Stomach (tissue), 19 donors: ENCODE measurements at regions of chr4 and their contacts with region 1.

Region 1: DNA sequence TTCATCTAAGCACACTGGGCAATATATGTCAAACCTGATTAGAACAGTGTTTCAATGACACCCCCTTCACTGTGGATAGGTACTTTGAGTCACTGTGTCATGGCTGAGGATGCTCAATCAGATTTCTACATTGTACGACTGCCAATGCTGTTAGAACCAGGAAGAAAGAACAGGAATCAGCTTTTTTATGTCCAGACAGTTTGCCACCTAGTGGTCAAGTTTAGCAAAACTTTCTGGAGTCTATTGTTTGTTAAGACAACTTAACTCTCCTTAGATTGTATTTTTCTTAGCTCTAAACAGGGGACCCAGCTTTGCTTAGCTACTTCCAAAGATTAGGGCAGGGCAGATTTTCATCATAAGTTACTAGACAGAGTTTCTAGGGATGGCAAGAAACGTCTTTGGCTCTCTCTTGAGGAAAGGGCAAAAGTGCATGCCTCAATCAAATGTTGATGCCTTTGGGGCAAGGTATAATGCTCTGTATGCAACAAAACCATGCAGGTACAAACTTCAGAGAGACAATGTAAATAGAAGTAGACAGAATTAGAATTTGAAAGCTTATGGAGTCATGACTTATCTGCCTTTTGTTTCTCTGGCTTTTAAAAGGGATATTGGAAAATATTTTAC is 40.5 kb upstream of the BMP3 start:
- DNase-seq: peak in 1 of 2 donors; percentile 82
- H3K4me3 ChIP-seq: no peak overlapping the region
- H3K27ac ChIP-seq: no peak overlapping the region
- H3K4me1 ChIP-seq: no peaks in the 10 kb centered on the region
- H3K27me3 ChIP-seq: peaks cover 0 to 4% (median 0%) of the 10 kb centered on the region in 3 donors
- CTCF ChIP-seq: peak in 5 of 7 experiments; percentile 43 to 77 (median 57)
- EP300 ChIP-seq: no peak
- POLR2A ChIP-seq: no peak

Region 2: GRCh38 chr4:80362578-80363181 is 627.4 kb before region 1 on chr4:
- intact Hi-C with region 1: loop called (anchors 5 kb)
- DNase-seq: peak in 1 of 2 donors; percentile 80
- H3K4me3 ChIP-seq: no peak overlapping the region
- H3K27ac ChIP-seq: no peak overlapping the region
- H3K4me1 ChIP-seq: no peaks in the 10 kb centered on the region
- H3K27me3 ChIP-seq: peaks cover 0 to 17% (median 6%) of the 10 kb centered on the region in 3 donors
- CTCF ChIP-seq: peak in 3 of 7 experiments; percentile 18 to 32 (median 30)
- EP300 ChIP-seq: no peak
- POLR2A ChIP-seq: no peak